ENCODE measurements at regions of chr10 and their contacts with region 1.

Region 1: DNA sequence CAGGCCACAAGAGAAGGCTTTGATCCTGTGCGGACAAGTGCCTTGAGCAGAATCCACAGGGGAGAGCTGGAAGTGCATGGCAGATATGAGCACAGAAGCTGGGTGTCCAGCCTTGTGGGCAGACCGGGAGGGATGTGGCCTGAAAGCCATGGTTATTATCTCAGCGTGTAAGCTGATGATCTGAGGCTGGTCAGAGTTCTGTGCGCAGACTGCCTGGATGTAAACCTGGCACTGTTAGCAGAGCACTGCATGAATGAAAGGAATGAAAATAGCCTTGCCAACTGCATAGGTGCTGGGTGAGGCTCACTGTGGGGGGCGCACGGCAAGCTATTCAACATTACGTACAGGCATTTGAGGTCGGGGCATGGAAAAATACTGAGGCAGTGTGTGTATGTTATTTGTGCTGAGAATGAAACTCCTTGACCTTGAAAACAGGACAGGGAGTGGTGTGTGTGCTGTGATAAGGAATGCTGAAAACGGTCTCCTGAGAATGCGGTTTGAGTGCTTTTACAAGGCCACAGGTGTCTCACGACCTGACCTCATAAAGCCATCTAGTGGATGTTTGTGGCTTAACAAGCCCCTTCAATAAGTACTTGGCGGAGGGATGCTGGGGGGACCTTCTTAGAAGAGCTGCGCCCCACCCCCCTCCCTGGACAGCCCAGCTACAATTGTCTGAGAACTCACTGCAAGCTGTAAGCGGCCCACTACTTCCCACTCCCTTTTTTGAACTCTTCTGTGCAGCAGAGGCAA is 18.7 kb downstream of the AKR1C1 start:
- DNase-seq: peak; percentile 81 to 91
- H3K4me3 ChIP-seq: no peak overlapping the region
- H3K4me3 Mint-ChIP-seq: peak overlapping the region; percentile 57
- H3K27ac Mint-ChIP-seq: peak overlapping the region; percentile 82
- H3K4me1 ChIP-seq: peaks cover 13% of the 10 kb centered on the region
- H3K4me1 Mint-ChIP-seq: peaks cover 19% of the 10 kb centered on the region
- H3K27me3 ChIP-seq: no peaks in the 10 kb centered on the region
- H3K27me3 Mint-ChIP-seq: no peaks in the 10 kb centered on the region
- CTCF ChIP-seq: peak; percentile 84 to 86

Region 2: DNA sequence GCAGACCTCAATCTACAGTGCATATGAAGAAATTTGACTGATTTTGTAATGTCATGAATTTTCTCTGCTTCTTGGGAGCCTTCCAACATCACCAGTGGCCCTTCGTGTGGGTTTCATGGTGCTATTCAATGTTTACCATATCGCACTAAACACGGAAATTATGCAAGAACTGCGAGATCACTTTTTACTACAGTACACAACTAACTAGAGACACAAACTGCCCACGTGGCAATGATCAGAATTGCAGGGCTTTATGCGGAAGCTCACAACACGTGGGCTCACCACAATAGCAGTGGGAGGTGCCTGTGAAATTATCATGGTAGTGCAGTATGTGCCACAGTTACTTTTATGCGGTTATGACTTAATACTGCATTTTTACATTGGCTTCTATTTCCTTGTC is 747.2 kb before region 1 on chr10:
- CTCF ChIA-PET with region 1: no interaction called
- POLR2A ChIA-PET with region 1: no interaction called
- intact Hi-C with region 1: no loop called
- DNase-seq: no peak
- H3K4me3 ChIP-seq: no peak overlapping the region
- H3K4me3 Mint-ChIP-seq: no peak overlapping the region
- H3K27ac Mint-ChIP-seq: no peak overlapping the region
- H3K4me1 ChIP-seq: no peaks in the 10 kb centered on the region
- H3K4me1 Mint-ChIP-seq: no peaks in the 10 kb centered on the region
- H3K27me3 ChIP-seq: no peaks in the 10 kb centered on the region
- H3K27me3 Mint-ChIP-seq: peaks cover 2% of the 10 kb centered on the region
- CTCF ChIP-seq: no peak

Region 3: GRCh38 chr10:4686644-4686996 is 295.3 kb before region 1 on chr10:
- CTCF ChIA-PET with region 1: no interaction called
- POLR2A ChIA-PET with region 1: no interaction called
- intact Hi-C with region 1: no loop called
- DNase-seq: no peak
- H3K4me3 ChIP-seq: no peak overlapping the region
- H3K4me3 Mint-ChIP-seq: no peak overlapping the region
- H3K27ac Mint-ChIP-seq: no peak overlapping the region
- H3K4me1 ChIP-seq: no peaks in the 10 kb centered on the region
- H3K4me1 Mint-ChIP-seq: peaks cover 3% of the 10 kb centered on the region
- H3K27me3 ChIP-seq: no peaks in the 10 kb centered on the region
- H3K27me3 Mint-ChIP-seq: peaks cover 5% of the 10 kb centered on the region
- CTCF ChIP-seq: no peak

Region 4: GRCh38 chr10:4813023-4813422 is 168.9 kb before region 1 on chr10:
- CTCF ChIA-PET with region 1: interaction called, 15 read pairs
- POLR2A ChIA-PET with region 1: no interaction called
- intact Hi-C with region 1: loop called (anchors 1 kb)
- DNase-seq: no peak
- H3K4me3 ChIP-seq: no peak overlapping the region
- H3K4me3 Mint-ChIP-seq: no peak overlapping the region
- H3K27ac Mint-ChIP-seq: no peak overlapping the region
- H3K4me1 ChIP-seq: peaks cover 11% of the 10 kb centered on the region; the same call in 1 of the 2 replicates
- H3K4me1 Mint-ChIP-seq: no peaks in the 10 kb centered on the region
- H3K27me3 ChIP-seq: no peaks in the 10 kb centered on the region
- H3K27me3 Mint-ChIP-seq: no peaks in the 10 kb centered on the region
- CTCF ChIP-seq: no peak

Region 5: GRCh38 chr10:4909118-4909517 is 72.8 kb before region 1 on chr10:
- CTCF ChIA-PET with region 1: no interaction called
- POLR2A ChIA-PET with region 1: no interaction called
- intact Hi-C with region 1: loop called (anchors 5 kb)
- DNase-seq: no peak
- H3K4me3 ChIP-seq: no peak overlapping the region
- H3K4me3 Mint-ChIP-seq: no peak overlapping the region
- H3K27ac Mint-ChIP-seq: no peak overlapping the region
- H3K4me1 ChIP-seq: no peaks in the 10 kb centered on the region
- H3K4me1 Mint-ChIP-seq: peaks cover 4% of the 10 kb centered on the region
- H3K27me3 ChIP-seq: no peaks in the 10 kb centered on the region
- H3K27me3 Mint-ChIP-seq: no peaks in the 10 kb centered on the region
- CTCF ChIP-seq: no peak

Region 6: DNA sequence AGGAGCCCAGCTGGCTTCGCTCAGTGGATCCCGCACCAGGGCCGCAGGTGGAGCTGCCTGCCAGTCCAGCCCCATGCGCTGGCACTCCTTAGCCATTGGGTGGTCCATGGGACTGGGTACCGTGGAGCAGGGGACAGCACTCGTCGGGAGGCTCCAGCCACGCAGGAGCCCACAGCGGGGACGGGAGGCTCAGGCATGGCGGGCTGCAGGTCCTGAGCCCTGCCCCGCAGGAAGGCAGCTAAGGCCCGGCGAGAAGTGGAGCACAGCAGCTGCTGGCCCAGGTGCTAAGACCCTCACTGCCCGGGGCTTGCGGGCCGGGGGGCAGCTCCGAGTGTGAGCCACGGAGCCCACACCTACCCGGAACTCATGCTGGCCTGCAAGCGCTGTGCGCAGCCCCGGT is 44.6 kb before region 1 on chr10:
- CTCF ChIA-PET with region 1: no interaction called
- POLR2A ChIA-PET with region 1: no interaction called
- intact Hi-C with region 1: no loop called
- DNase-seq: no peak
- H3K4me3 ChIP-seq: no peak overlapping the region
- H3K4me3 Mint-ChIP-seq: no peak overlapping the region
- H3K27ac Mint-ChIP-seq: no peak overlapping the region
- H3K4me1 ChIP-seq: peaks cover 28% of the 10 kb centered on the region
- H3K4me1 Mint-ChIP-seq: peaks cover 24% of the 10 kb centered on the region
- H3K27me3 ChIP-seq: no peaks in the 10 kb centered on the region
- H3K27me3 Mint-ChIP-seq: no peaks in the 10 kb centered on the region
- CTCF ChIP-seq: no peak

Region 7: GRCh38 chr10:4947635-4948596 is 34.0 kb before region 1 on chr10:
- CTCF ChIA-PET with region 1: no interaction called
- POLR2A ChIA-PET with region 1: no interaction called
- intact Hi-C with region 1: loop called (anchors 2 kb)
- DNase-seq: peak; percentile 63 to 69
- H3K4me3 ChIP-seq: no peak overlapping the region
- H3K4me3 Mint-ChIP-seq: peak overlapping the region; percentile 42
- H3K27ac Mint-ChIP-seq: peak overlapping the region; percentile 85
- H3K4me1 ChIP-seq: peaks cover 51% of the 10 kb centered on the region
- H3K4me1 Mint-ChIP-seq: peaks cover 48% of the 10 kb centered on the region
- H3K27me3 ChIP-seq: no peaks in the 10 kb centered on the region
- H3K27me3 Mint-ChIP-seq: no peaks in the 10 kb centered on the region
- CTCF ChIP-seq: no peak

Region 8: DNA sequence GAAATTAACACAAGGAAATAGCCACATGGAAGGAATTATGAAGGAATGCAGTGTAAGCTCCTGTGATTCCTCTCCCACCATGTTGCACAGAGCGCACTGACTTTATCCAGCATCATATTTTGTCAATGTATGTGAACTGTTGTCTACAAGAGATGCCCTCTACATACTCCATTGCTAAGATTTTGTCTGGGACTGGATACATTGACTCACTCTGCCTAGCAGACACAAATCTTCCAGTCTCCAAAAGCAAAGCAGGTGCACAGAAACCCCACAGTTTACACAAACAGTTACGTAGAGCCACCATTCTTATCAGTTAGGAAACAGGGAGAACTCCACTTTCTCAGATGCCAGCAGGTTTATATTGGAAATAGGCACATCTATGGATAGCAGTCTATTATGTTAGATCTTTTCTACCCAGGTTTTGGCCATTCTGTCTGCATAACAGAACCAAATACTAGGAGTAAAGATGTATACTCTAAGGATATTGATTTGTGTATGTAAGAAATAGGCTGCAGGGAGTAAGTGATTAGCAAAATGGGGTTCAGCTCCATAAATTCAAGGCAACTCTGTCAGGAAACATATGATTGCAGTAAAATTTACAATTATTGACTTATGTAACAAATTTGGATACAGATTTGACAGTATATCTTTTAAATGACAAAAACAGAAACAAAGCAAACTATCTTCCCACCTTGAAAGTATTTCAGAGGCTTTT is 20.3 kb after region 1 on chr10:
- CTCF ChIA-PET with region 1: no interaction called
- POLR2A ChIA-PET with region 1: no interaction called
- intact Hi-C with region 1: no loop called
- DNase-seq: no peak
- H3K4me3 ChIP-seq: no peak overlapping the region
- H3K4me3 Mint-ChIP-seq: peak overlapping the region; percentile 19
- H3K27ac Mint-ChIP-seq: no peak overlapping the region
- H3K4me1 ChIP-seq: 0 out of 2 replicates have a peak, but pooled peaks cover 7% of the 10 kb centered on the region
- H3K4me1 Mint-ChIP-seq: no peaks in the 10 kb centered on the region
- H3K27me3 ChIP-seq: no peaks in the 10 kb centered on the region
- H3K27me3 Mint-ChIP-seq: no peaks in the 10 kb centered on the region
- CTCF ChIP-seq: no peak

Region 9: GRCh38 chr10:5283305-5284158 is 301.6 kb after region 1 on chr10:
- CTCF ChIA-PET with region 1: no interaction called
- POLR2A ChIA-PET with region 1: no interaction called
- intact Hi-C with region 1: loop called (anchors 1 kb)
- DNase-seq: peak; percentile 81 to 83
- H3K4me3 ChIP-seq: no peak overlapping the region
- H3K4me3 Mint-ChIP-seq: peak overlapping the region; percentile 50
- H3K27ac Mint-ChIP-seq: peak overlapping the region; percentile 22
- H3K4me1 ChIP-seq: no peaks in the 10 kb centered on the region; the same call in 1 of the 2 replicates
- H3K4me1 Mint-ChIP-seq: peaks cover 7% of the 10 kb centered on the region
- H3K27me3 ChIP-seq: no peaks in the 10 kb centered on the region
- H3K27me3 Mint-ChIP-seq: peaks cover 7% of the 10 kb centered on the region
- CTCF ChIP-seq: peak; percentile 88 to 92

Region 10: DNA sequence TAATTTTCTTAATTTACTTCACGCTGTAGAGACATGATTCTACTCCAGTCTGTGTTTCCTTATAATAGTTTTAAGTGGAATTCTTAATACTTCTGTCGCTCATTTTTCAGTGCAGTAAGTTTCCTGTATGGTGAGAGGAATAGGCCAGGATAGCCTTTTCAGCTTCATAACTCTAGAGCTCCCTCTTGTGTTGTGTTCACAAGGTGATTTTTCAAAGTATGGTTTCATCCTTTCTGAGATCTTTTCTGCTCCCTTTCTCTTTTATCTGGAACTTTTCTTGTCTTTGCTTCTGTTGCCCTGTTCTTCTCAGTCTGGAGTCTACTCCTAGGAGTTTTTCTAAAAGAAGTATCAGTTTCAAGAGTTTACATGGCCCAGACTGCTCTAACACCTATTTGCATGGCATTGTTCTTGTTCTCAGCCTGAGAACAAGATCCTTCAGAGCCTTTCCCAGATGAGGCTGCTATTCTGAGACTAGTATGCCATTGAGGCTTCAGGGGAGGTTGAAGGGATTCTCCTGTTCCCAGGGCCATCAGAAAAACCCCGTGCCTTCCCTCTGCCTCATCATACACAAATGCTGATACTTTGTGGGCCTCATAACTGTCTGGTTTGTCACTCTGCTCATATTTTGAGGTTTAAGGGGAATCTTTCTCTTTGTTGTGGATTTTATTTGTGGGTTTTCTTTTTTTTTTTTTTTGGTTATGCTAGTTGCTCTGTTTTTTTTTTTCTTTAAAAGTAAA is 452.3 kb after region 1 on chr10:
- CTCF ChIA-PET with region 1: no interaction called
- POLR2A ChIA-PET with region 1: no interaction called
- intact Hi-C with region 1: loop called (anchors 2 kb)
- DNase-seq: peak in 1 of 2 experiments; percentile 66
- H3K4me3 ChIP-seq: no peak overlapping the region
- H3K4me3 Mint-ChIP-seq: no peak overlapping the region
- H3K27ac Mint-ChIP-seq: no peak overlapping the region
- H3K4me1 ChIP-seq: no peaks in the 10 kb centered on the region
- H3K4me1 Mint-ChIP-seq: peaks cover 17% of the 10 kb centered on the region
- H3K27me3 ChIP-seq: no peaks in the 10 kb centered on the region
- H3K27me3 Mint-ChIP-seq: no peaks in the 10 kb centered on the region
- CTCF ChIP-seq: peak; percentile 81 to 86

Measured in Caco-2 (cell line).